ENCODE measurements at regions of chr16 and their contacts with region 1.

Region 1: GRCh38 chr16:77660311-77660710 is 62.0 kb upstream of the NUDT7 start:
- DNase-seq: peak in 1 of 2 experiments; percentile 38
- H3K4me3 ChIP-seq: no peak overlapping the region
- H3K4me3 Mint-ChIP-seq: no peak overlapping the region
- H3K27ac Mint-ChIP-seq: no peak overlapping the region
- H3K4me1 ChIP-seq: no peaks in the 10 kb centered on the region
- H3K4me1 Mint-ChIP-seq: peaks cover 6% of the 10 kb centered on the region
- H3K27me3 ChIP-seq: no peaks in the 10 kb centered on the region
- H3K27me3 Mint-ChIP-seq: peaks cover 17% of the 10 kb centered on the region
- CTCF ChIP-seq: peak; percentile 68 to 85

Region 2: DNA sequence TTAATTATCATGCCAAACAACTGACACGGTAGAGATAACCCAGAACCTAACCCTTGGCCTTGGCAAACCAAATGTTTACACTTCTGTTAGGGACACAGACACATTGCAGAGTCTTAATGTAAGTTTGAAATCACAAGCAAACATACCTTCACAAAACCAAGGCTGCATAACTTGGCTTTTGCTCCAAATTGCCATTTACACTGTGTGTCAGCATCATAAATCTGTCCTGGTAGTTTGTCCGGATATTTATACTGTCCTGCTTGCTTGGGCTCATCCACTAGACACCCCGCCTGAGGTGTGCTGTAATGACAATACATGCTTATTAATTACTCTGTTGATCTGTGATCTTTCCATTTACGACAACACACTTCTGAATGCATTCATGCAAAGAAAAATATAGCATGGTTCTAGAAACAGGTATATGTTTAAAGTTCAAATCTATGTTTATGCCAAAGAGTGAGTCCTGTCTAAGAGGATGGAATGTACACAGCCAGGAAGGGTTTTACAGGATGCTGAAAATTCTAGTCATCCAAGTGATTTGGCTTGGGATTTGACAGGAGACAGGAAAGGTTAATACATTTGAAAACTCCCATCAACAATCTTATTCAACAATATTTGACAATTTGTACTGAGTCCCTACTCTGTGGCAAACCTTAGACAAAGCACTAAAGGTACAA is 306.6 kb before region 1 on chr16:
- CTCF ChIA-PET with region 1: no interaction called
- POLR2A ChIA-PET with region 1: no interaction called
- intact Hi-C with region 1: no loop called
- DNase-seq: peak; percentile 54 to 61
- H3K4me3 ChIP-seq: no peak overlapping the region
- H3K4me3 Mint-ChIP-seq: no peak overlapping the region
- H3K27ac Mint-ChIP-seq: no peak overlapping the region
- H3K4me1 ChIP-seq: peaks cover 42% of the 10 kb centered on the region
- H3K4me1 Mint-ChIP-seq: peaks cover 29% of the 10 kb centered on the region
- H3K27me3 ChIP-seq: no peaks in the 10 kb centered on the region
- H3K27me3 Mint-ChIP-seq: no peaks in the 10 kb centered on the region
- CTCF ChIP-seq: no peak

Region 3: DNA sequence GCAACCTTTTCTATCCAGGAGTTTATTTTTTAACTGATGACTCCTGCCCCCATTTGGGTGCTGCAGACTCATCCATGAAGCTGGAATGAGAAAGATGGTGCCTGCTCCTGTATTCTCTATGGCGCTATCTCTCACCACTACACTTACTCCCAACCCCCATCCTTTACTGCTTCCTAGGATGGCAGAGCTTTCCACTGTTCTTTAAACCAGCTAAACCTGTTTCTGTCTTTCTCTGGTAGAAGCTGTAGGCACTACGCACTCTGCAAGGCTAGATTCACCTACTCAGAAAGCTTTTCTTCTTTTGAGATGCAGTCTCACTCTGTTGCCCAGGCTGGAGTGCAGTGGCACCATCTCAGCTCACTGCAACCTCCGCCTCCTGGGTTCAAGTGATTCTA is 272.5 kb before region 1 on chr16:
- CTCF ChIA-PET with region 1: no interaction called
- POLR2A ChIA-PET with region 1: no interaction called
- intact Hi-C with region 1: no loop called
- DNase-seq: peak in 1 of 2 experiments; percentile 39
- H3K4me3 ChIP-seq: no peak overlapping the region
- H3K4me3 Mint-ChIP-seq: no peak overlapping the region
- H3K27ac Mint-ChIP-seq: no peak overlapping the region
- H3K4me1 ChIP-seq: peaks cover 8% of the 10 kb centered on the region; the same call in 1 of the 2 replicates
- H3K4me1 Mint-ChIP-seq: no peaks in the 10 kb centered on the region
- H3K27me3 ChIP-seq: no peaks in the 10 kb centered on the region
- H3K27me3 Mint-ChIP-seq: no peaks in the 10 kb centered on the region
- CTCF ChIP-seq: no peak

Region 4: DNA sequence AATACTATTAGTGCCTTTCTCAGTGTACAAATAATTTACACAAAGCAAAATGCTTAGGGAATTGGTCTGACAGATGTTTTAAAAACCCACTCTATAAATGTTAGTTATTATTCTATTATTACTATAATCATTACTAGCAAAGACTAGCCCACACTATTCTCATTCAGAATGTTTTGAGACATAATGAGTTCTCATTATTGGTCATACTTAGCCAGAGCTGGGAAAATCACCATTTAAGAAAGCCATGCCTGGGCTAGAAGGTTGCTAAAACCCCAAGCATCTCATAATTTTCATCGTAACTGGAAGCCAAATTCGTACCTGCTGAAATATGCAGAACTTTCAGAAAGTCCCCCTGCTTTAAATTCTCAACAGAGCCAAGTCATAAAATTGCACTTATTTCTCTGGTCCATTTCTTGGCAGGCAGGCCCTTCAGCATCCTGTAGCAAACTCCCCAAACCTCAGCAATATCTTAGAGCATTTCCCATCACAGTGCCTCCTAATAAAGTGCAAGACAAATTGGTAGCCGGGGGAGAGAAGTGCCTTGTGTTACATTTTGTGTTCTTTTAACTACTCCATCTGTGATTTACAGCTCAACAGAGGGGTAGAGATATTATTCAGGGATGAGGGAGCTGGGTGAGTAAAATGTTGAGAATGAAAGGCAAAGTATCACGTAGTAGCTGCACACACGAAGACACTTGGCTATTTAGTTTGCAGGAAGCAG is 145.7 kb before region 1 on chr16:
- CTCF ChIA-PET with region 1: no interaction called
- POLR2A ChIA-PET with region 1: no interaction called
- intact Hi-C with region 1: no loop called
- DNase-seq: no peak
- H3K4me3 ChIP-seq: no peak overlapping the region
- H3K4me3 Mint-ChIP-seq: no peak overlapping the region
- H3K27ac Mint-ChIP-seq: no peak overlapping the region
- H3K4me1 ChIP-seq: no peaks in the 10 kb centered on the region
- H3K4me1 Mint-ChIP-seq: no peaks in the 10 kb centered on the region
- H3K27me3 ChIP-seq: no peaks in the 10 kb centered on the region; the same call in 1 of the 2 replicates
- H3K27me3 Mint-ChIP-seq: peaks cover 27% of the 10 kb centered on the region
- CTCF ChIP-seq: no peak

Region 5: DNA sequence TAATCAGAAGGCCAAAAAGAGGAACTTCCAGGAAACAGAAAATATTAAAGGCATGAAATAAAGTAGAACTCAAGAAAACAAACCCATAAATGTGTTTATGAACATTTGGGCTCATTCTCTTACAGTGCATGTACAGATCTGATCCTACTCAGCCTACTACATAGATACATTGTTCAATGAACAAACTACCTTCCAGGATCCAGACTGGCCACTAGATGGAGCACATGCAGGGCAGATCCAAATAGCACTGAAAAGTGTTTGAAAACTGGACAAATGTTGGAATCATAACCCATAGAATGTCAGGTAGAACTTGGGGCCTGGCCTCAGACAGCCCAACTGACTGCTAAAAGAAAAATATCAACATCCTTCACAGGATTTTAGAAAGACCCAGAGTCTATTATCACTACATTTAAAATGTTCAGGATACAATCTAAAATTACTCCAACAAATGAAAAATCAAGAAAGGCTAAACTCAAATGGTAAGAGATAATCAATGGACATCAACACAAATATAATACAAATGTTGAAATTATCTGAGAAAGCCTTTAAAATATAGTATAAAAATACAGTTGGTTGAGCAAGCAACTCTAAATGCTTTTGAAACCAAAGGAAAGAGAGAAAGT is 60.4 kb before region 1 on chr16:
- CTCF ChIA-PET with region 1: no interaction called
- POLR2A ChIA-PET with region 1: no interaction called
- intact Hi-C with region 1: loop called (anchors 1 kb)
- DNase-seq: peak; percentile 50 to 58
- H3K4me3 ChIP-seq: no peak overlapping the region
- H3K4me3 Mint-ChIP-seq: no peak overlapping the region
- H3K27ac Mint-ChIP-seq: no peak overlapping the region
- H3K4me1 ChIP-seq: no peaks in the 10 kb centered on the region
- H3K4me1 Mint-ChIP-seq: no peaks in the 10 kb centered on the region
- H3K27me3 ChIP-seq: no peaks in the 10 kb centered on the region
- H3K27me3 Mint-ChIP-seq: peaks cover 30% of the 10 kb centered on the region
- CTCF ChIP-seq: peak; percentile 82 to 97

Measured in Caco-2 (cell line).